T-cell (primary cell): ENCODE measurements at regions of chrX and their contacts with region 1.

Region 1: GRCh38 chrX:107776649-107777535 is 641 bp upstream of the NCBP2L start:
- DNase-seq: peak; percentile 46 to 86 (median 70)
- ATAC-seq: peak; percentile 72 to 77 (median 74)
- H3K4me3 ChIP-seq: peak overlapping the region; percentile 69 to 73
- H3K4me3 Mint-ChIP-seq: peak overlapping the region; percentile 84 to 90 (median 87)
- H3K27ac ChIP-seq: peak overlapping the region; percentile 47
- H3K27ac Mint-ChIP-seq: peak overlapping the region; percentile 80 to 85
- H3K4me1 ChIP-seq: peaks cover 2 to 22% of the 10 kb centered on the region in 2 experiments
- H3K4me1 Mint-ChIP-seq: peaks cover 14 to 22% (median 16%) of the 10 kb centered on the region in 3 donors
- H3K27me3 ChIP-seq: peaks cover 2 to 7% of the 10 kb centered on the region in 2 experiments
- H3K27me3 Mint-ChIP-seq: peaks cover 0 to 12% of the 10 kb centered on the region in 2 donors

Region 2: GRCh38 chrX:107627838-107628661 is 148.8 kb before region 1 on chrX and contains the start of gene PRPS1:
- CTCF ChIA-PET with region 1: interaction called, 3 to 13 read pairs
- POLR2A ChIA-PET with region 1: interaction called in 1 of 2 experiments, 8 read pairs
- DNase-seq: peak; percentile 69 to 92 (median 87)
- ATAC-seq: peak; percentile 96 to 98 (median 97)
- H3K4me3 ChIP-seq: peak within 1 kb of the TSS; percentile 71 to 87
- H3K4me3 Mint-ChIP-seq: peak within 1 kb of the TSS; percentile 87 to 95 (median 93)
- H3K27ac ChIP-seq: peak within 1 kb of the TSS; percentile 86
- H3K27ac Mint-ChIP-seq: peak within 1 kb of the TSS; percentile 88
- H3K4me1 ChIP-seq: peaks cover 7% of the 10 kb centered on the region in 2 experiments
- H3K4me1 Mint-ChIP-seq: peaks cover 32 to 36% (median 32%) of the 10 kb centered on the region in 3 donors
- H3K27me3 ChIP-seq: no peaks in the 10 kb centered on the region
- H3K27me3 Mint-ChIP-seq: peaks cover 0 to 31% of the 10 kb centered on the region in 2 donors
- total RNA-seq, gene PRPS1: 57.9 to 74.0 (median 60.7) TPM

Region 3: GRCh38 chrX:107654872-107655761 is 121.8 kb before region 1 on chrX:
- CTCF ChIA-PET with region 1: interaction called, 16 to 48 read pairs
- POLR2A ChIA-PET with region 1: interaction called in 1 of 2 experiments, 5 read pairs
- DNase-seq: peak; percentile 37 to 78 (median 60)
- ATAC-seq: peak; percentile 85 to 89 (median 87)
- H3K4me3 ChIP-seq: no peak overlapping the region
- H3K4me3 Mint-ChIP-seq: no peak overlapping the region
- H3K27ac ChIP-seq: no peak overlapping the region
- H3K27ac Mint-ChIP-seq: peak overlapping the region in 1 of 2 donors; percentile 55
- H3K4me1 ChIP-seq: peaks cover 0 to 15% of the 10 kb centered on the region in 2 experiments
- H3K4me1 Mint-ChIP-seq: peaks cover 11 to 20% (median 13%) of the 10 kb centered on the region in 3 donors
- H3K27me3 ChIP-seq: no peaks in the 10 kb centered on the region
- H3K27me3 Mint-ChIP-seq: peaks cover 0 to 22% of the 10 kb centered on the region in 2 donors

Region 4: GRCh38 chrX:107672955-107673378 is 103.9 kb before region 1 on chrX:
- CTCF ChIA-PET with region 1: interaction called, 6 to 41 read pairs
- POLR2A ChIA-PET with region 1: interaction called, 7 to 29 read pairs
- DNase-seq: peak; percentile 64 to 91 (median 81)
- ATAC-seq: peak; percentile 51 to 57 (median 56)
- H3K4me3 ChIP-seq: peak overlapping the region in 1 of 2 donors; percentile 32
- H3K4me3 Mint-ChIP-seq: peak overlapping the region; percentile 61 to 76 (median 72)
- H3K27ac ChIP-seq: peak overlapping the region; percentile 99
- H3K27ac Mint-ChIP-seq: peak overlapping the region; percentile 93 to 99
- H3K4me1 ChIP-seq: peaks cover 22 to 62% of the 10 kb centered on the region in 2 experiments
- H3K4me1 Mint-ChIP-seq: peaks cover 48 to 65% (median 64%) of the 10 kb centered on the region in 3 donors
- H3K27me3 ChIP-seq: no peaks in the 10 kb centered on the region
- H3K27me3 Mint-ChIP-seq: peaks cover 0 to 5% of the 10 kb centered on the region in 2 donors

Region 5: GRCh38 chrX:107716816-107717700 is 59.8 kb before region 1 on chrX:
- CTCF ChIA-PET with region 1: interaction called, 7 to 23 read pairs
- POLR2A ChIA-PET with region 1: interaction called, 4 to 25 read pairs
- DNase-seq: peak; percentile 77 to 94 (median 89)
- ATAC-seq: peak; percentile 71 to 87 (median 84)
- H3K4me3 ChIP-seq: peak overlapping the region; percentile 88 to 94
- H3K4me3 Mint-ChIP-seq: peak overlapping the region; percentile 89 to 96 (median 95)
- H3K27ac ChIP-seq: peak overlapping the region; percentile 99
- H3K27ac Mint-ChIP-seq: peak overlapping the region; percentile 94 to 100
- H3K4me1 ChIP-seq: peaks cover 11 to 51% of the 10 kb centered on the region in 2 experiments
- H3K4me1 Mint-ChIP-seq: peaks cover 49 to 59% (median 58%) of the 10 kb centered on the region in 3 donors
- H3K27me3 ChIP-seq: no peaks in the 10 kb centered on the region
- H3K27me3 Mint-ChIP-seq: peaks cover 0 to 8% of the 10 kb centered on the region in 2 donors

Region 6: DNA sequence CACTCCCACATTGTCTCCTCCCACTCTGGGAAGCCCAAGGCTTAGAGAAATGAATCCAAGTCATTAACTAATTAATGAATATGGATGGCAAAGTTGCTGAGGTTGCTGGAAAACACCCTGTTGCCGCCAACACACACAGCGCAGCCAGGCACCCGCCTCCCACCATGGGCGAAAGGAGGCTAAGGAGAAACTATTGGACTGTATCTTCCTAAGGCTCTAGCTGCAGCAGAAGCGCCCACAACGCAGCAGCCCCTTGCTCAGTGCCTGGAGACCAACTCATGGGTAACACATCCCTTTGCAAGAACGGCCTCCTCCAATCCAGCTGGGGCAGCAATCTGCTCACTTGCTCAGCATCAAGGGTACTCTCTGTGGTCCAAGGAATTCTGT is 35.5 kb before region 1 on chrX:
- CTCF ChIA-PET with region 1: interaction called, 3 to 10 read pairs
- POLR2A ChIA-PET with region 1: interaction called, 4 to 6 read pairs
- DNase-seq: peak in 3 of 35 experiments; percentile 1 to 3 (median 1)
- ATAC-seq: peak in 3 of 4 experiments; percentile 8 to 19 (median 9)
- H3K4me3 ChIP-seq: peak overlapping the region; percentile 21 to 25
- H3K4me3 Mint-ChIP-seq: peak overlapping the region; percentile 71 to 91 (median 77)
- H3K27ac ChIP-seq: peak overlapping the region; percentile 84
- H3K27ac Mint-ChIP-seq: peak overlapping the region; percentile 96 to 98
- H3K4me1 ChIP-seq: peaks cover 12 to 57% of the 10 kb centered on the region in 2 experiments
- H3K4me1 Mint-ChIP-seq: peaks cover 42 to 51% (median 46%) of the 10 kb centered on the region in 3 donors
- H3K27me3 ChIP-seq: no peaks in the 10 kb centered on the region
- H3K27me3 Mint-ChIP-seq: peaks cover 4 to 11% of the 10 kb centered on the region in 2 donors

Region 7: GRCh38 chrX:107826238-107827029 is 49.5 kb after region 1 on chrX:
- CTCF ChIA-PET with region 1: interaction called in 1 of 2 experiments, 4 read pairs
- POLR2A ChIA-PET with region 1: interaction called in 1 of 2 experiments, 21 read pairs
- DNase-seq: peak in 30 of 35 experiments; percentile 2 to 61 (median 20)
- ATAC-seq: peak; percentile 76 to 82 (median 79)
- H3K4me3 ChIP-seq: peak overlapping the region; percentile 29 to 62
- H3K4me3 Mint-ChIP-seq: peak overlapping the region; percentile 82 to 90 (median 88)
- H3K27ac ChIP-seq: peak overlapping the region; percentile 72
- H3K27ac Mint-ChIP-seq: peak overlapping the region; percentile 85 to 87
- H3K4me1 ChIP-seq: peaks cover 0 to 10% of the 10 kb centered on the region in 2 experiments
- H3K4me1 Mint-ChIP-seq: peaks cover 35 to 51% (median 47%) of the 10 kb centered on the region in 3 donors
- H3K27me3 ChIP-seq: peaks cover 0 to 2% of the 10 kb centered on the region in 2 experiments
- H3K27me3 Mint-ChIP-seq: peaks cover 0 to 40% of the 10 kb centered on the region in 2 donors

Region 8: DNA sequence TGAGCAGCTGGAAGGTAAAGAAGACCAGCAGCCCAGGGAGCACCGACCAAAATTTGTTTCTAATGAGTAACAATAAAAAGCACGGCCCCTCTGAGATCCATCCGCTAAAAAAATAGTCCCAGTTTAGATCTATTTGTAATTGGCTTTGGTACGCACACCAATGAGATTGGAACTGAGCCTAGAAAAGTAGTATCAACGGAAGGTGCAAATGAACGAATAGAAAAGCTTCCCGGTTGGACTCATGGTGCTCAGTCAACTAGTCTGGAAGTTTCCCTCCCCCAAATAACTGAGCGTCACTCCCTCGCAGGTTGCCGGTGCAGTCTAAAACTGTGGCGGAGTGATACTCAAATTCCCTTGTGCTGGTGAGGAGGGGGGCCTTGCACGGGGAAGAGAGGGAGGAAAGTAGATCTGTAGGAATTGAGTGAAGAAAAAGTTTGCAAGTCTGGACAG is 662.6 kb after region 1 on chrX and contains the start of gene COL4A5:
- CTCF ChIA-PET with region 1: no interaction called
- POLR2A ChIA-PET with region 1: no interaction called
- DNase-seq: peak in 1 of 35 experiments; percentile 0
- ATAC-seq: no peak
- H3K4me3 ChIP-seq: peak within 1 kb of the TSS in 1 of 2 donors; percentile 15
- H3K4me3 Mint-ChIP-seq: peak within 1 kb of the TSS; percentile 25 to 56 (median 41)
- H3K27ac ChIP-seq: no peak within 1 kb of the TSS
- H3K27ac Mint-ChIP-seq: no peak within 1 kb of the TSS
- H3K4me1 ChIP-seq: peaks cover 0 to 7% of the 10 kb centered on the region in 2 experiments
- H3K4me1 Mint-ChIP-seq: peaks cover 10 to 13% (median 10%) of the 10 kb centered on the region in 3 donors
- H3K27me3 ChIP-seq: peaks cover 4 to 15% of the 10 kb centered on the region in 2 experiments
- H3K27me3 Mint-ChIP-seq: peaks cover 20 to 64% of the 10 kb centered on the region in 2 donors
- total RNA-seq, gene COL4A5: 0.22 to 0.59 (median 0.36) TPM in 4 of 5 donors, not detected in the other